AG04450 (cell line): ENCODE measurements at regions of chr5 and their contacts with region 1.

Region 1: GRCh38 chr5:6712577-6713275 is 506 bp upstream of the TENT4A start:
- DNase-seq: peak; percentile 86
- H3K4me3 ChIP-seq: peak overlapping the region; percentile 78
- H3K27ac ChIP-seq: peak overlapping the region; percentile 94
- H3K27me3 ChIP-seq: no peaks in the 10 kb centered on the region
- CTCF ChIP-seq: no peak

Region 2: GRCh38 chr5:6632917-6633468 is 79.7 kb before region 1 on chr5 and contains the starts of genes NSUN2 and SRD5A1:
- CTCF ChIA-PET with region 1: no interaction called
- POLR2A ChIA-PET with region 1: interaction called, 18 read pairs
- DNase-seq: peak; percentile 76
- H3K4me3 ChIP-seq: peak within 1 kb of the TSS; percentile 91
- H3K27ac ChIP-seq: peak within 1 kb of the TSS; percentile 95
- H3K27me3 ChIP-seq: no peaks in the 10 kb centered on the region
- CTCF ChIP-seq: no peak
- polyA plus RNA-seq, gene NSUN2: 41.5 and 42.0 TPM in 2 replicates
- polyA plus RNA-seq, gene SRD5A1: 19.7 and 20.7 TPM in 2 replicates

Region 3: DNA sequence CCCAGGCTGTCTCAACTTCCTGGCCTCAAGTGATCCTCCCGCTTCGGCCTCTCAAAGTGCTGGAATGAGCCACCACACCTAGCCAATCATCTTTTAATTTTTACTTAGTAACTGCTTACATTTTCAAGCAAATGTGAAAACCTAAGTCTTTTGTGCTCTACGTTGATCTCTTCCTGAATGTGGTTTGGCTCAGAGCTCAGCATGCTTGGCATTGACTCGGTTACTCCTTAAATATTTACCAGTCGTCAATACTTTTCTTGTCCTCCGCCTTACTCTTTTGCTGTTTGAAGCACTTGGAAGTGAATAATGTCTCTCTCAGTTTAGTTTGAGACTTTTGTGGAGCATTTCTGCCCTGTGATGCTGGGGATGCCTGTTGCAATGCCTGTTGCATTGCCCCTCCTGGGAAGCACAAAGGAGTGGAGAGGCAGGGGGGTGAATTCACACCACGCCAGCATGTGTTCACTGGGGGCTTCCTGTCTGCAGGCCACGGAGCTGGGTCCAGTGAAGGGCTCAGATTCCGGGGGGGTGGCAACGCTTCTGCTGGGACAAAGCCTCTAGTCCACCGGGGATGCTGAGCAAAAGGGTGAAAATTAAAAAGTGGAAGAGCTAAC is 12.5 kb before region 1 on chr5:
- CTCF ChIA-PET with region 1: no interaction called
- POLR2A ChIA-PET with region 1: no interaction called
- DNase-seq: no peak
- H3K4me3 ChIP-seq: no peak overlapping the region
- H3K27ac ChIP-seq: no peak overlapping the region
- H3K27me3 ChIP-seq: peaks cover 5% of the 10 kb centered on the region
- CTCF ChIP-seq: no peak